Heart left ventricle (tissue), 16 donors: ENCODE measurements at regions of chr15 and their contacts with region 1.

Region 1: DNA sequence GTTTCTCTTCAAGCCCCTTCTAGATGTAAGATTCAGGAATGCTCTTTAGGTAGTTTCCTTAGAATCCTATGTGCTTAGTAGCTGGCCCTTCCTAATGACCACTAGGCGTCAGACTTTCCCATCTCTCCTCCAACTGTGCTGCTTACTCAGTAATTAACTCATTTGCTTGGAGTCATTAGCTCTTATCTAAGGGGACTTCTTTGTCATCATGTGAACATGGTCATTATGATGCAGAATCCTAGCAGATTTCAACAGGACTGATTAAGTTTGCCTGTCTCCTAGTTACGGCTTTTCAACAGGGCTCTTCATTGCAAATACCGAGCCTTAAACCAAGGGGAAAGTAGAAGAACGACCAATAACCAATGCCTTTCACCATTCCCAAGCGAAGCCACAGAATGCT is 46.4 kb downstream of the GJD2 start:
- DNase-seq: no peak
- ATAC-seq: peak in 3 of 4 donors; percentile 63 to 83 (median 74)
- H3K4me3 ChIP-seq: peak overlapping the region in 1 of 12 donors; percentile 16
- H3K27ac ChIP-seq: peak overlapping the region in 1 of 12 donors; percentile 14
- H3K4me1 ChIP-seq: peaks cover 0 to 12% (median 0%) of the 10 kb centered on the region in 12 donors
- H3K27me3 ChIP-seq: peaks cover 0 to 6% (median 0%) of the 10 kb centered on the region in 9 donors
- CTCF ChIP-seq: peak; percentile 36 to 78 (median 68)
- POLR2A ChIP-seq: no peak

Region 2: DNA sequence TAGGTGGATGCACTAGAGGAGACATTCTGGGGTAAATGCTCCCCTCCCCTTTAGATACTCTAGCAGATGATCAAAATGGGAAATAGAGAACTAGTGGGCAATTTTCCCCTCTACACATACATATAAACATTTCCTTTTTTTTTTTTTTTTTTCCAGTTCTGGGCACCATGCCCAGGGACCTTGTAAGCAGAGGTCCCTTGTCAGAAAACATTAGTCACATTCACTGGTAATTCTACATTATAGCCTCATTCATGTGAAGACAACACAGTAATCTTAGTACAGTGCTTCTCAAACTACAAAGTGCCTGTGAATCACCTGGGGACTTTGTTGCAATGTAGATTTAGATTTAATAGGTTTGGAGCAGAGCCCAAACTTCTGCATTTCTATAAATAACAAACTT is 147.0 kb after region 1 on chr15:
- intact Hi-C with region 1: loop called in 1 of 10 experiments (anchors 5 kb)
- DNase-seq: no peak
- ATAC-seq: peak in 3 of 4 donors; percentile 24 to 41 (median 36)
- H3K4me3 ChIP-seq: no peak overlapping the region
- H3K27ac ChIP-seq: peak overlapping the region in 4 of 12 donors; percentile 9 to 32 (median 23)
- H3K4me1 ChIP-seq: peaks cover 2 to 31% (median 19%) of the 10 kb centered on the region in 12 donors
- H3K27me3 ChIP-seq: no peaks in the 10 kb centered on the region
- CTCF ChIP-seq: no peak
- POLR2A ChIP-seq: no peak

Region 3: DNA sequence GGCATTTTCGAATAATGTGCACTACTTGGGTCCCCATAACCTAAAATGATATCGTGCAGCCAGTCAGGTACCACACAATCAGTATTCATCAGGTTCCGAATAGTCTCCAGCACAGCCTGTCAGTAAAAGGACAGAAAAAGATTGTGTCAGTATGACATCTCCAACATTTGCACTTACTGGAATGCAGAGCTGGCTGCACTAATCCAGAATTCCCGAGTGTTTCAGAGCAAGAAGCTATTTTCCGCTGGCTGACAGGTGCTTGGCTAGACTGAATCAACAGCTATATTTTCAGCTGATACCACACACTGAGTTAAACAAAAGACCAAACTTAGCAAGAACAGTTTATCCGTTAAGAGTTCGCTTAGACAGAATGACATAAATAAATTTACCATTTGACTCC is 192.3 kb after region 1 on chr15:
- intact Hi-C with region 1: loop called in 1 of 10 experiments (anchors 5 kb)
- DNase-seq: peak in 1 of 5 donors; percentile 19
- ATAC-seq: peak; percentile 58 to 94 (median 84)
- H3K4me3 ChIP-seq: no peak overlapping the region
- H3K27ac ChIP-seq: peak overlapping the region in 11 of 12 donors; percentile 9 to 67 (median 49)
- H3K4me1 ChIP-seq: peaks cover 0 to 8% (median 0%) of the 10 kb centered on the region in 12 donors
- H3K27me3 ChIP-seq: no peaks in the 10 kb centered on the region
- CTCF ChIP-seq: no peak
- POLR2A ChIP-seq: no peak

Region 4: DNA sequence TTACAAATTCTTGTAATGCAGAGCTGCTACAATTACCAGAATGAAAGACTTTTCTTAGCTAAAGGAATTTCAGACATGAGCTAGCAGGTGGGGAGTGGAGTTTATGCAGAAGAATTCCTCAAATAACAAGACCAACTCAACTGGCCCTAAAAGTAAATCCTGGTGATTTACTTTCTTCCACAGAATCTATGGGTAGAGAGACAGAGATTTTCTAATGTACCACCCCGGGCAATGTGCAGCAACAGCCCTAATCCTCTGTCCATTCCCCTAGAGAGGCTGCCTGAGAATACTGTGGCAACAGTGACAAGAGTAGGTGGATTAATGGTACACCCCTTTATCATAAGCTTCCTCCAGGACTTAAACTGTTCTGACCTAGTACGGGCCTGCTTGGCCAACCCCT is 205.9 kb after region 1 on chr15:
- intact Hi-C with region 1: loop called in 6 of 10 experiments (anchors 2 to 10 kb)
- DNase-seq: no peak
- ATAC-seq: no peak
- H3K4me3 ChIP-seq: no peak overlapping the region
- H3K27ac ChIP-seq: no peak overlapping the region
- H3K4me1 ChIP-seq: no peaks in the 10 kb centered on the region
- H3K27me3 ChIP-seq: no peaks in the 10 kb centered on the region
- CTCF ChIP-seq: no peak
- POLR2A ChIP-seq: no peak

Region 5: DNA sequence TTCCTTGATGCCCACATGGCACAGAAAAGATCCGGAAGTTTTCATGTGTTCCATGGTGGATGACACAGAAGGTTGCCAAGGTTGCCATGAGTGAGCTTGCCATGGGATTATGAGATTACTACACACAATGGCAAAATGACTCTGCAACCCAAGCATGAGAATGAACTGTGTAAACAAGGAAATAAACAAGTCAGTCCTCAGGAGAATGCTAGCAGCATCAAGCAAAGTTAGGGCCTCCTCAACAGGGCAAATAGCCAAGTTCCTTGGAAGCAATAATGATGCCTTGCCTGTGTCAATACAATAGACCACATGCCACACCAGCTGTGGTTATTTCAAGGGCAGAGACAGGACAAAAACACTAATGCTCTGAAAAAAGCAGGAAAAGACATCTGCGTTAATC is 219.3 kb after region 1 on chr15:
- intact Hi-C with region 1: loop called in 4 of 10 experiments (anchors 5 kb)
- DNase-seq: no peak
- ATAC-seq: peak in 1 of 4 donors; percentile 39
- H3K4me3 ChIP-seq: no peak overlapping the region
- H3K27ac ChIP-seq: no peak overlapping the region
- H3K4me1 ChIP-seq: no peaks in the 10 kb centered on the region
- H3K27me3 ChIP-seq: no peaks in the 10 kb centered on the region
- CTCF ChIP-seq: no peak
- POLR2A ChIP-seq: no peak